ENCODE measurements at regions of chr11 and their contacts with region 1.

Region 1: DNA sequence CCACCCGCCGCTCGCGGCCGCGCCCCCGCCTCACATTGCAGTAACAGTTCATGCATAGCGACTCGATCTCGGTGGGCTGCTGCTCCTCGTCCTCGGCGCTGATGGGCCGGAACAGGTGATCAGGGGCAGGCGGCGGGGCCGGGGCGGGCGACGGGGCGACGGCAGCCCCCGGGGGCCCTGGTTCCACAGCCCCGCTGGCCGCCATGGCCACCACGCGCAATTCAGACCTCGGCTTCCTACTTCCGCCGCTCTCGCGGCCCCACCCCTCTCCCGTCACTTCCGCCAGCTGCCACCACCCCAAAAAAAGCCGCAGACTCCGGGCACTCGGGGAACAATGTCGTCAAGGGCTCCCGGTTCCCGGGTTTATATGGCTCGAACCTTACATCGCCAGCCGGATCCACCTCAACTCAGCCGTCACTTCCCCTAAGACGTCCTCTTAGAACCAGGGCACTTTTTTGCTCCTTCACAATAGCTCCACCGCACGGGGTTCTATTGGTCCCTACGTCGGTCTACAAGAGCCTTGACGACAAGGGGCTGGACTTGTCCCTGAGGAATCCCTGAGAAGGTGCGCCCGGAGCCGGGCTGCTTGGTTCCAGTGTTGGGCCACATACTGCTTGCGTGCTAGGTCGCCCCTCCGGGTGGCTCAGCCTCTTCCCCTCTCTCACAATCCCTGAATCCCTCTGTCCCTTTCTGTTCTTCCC is at the start of gene ZPR1:
- DNase-seq: peak; percentile 83
- H3K4me3 Mint-ChIP-seq: peak within 1 kb of the TSS; percentile 90
- H3K27ac Mint-ChIP-seq: peak within 1 kb of the TSS; percentile 81
- H3K4me1 Mint-ChIP-seq: peaks cover 44% of the 10 kb centered on the region
- H3K27me3 Mint-ChIP-seq: no peaks in the 10 kb centered on the region
- total RNA-seq, gene ZPR1: 84.1 and 84.7 TPM in 2 replicates

Region 2: DNA sequence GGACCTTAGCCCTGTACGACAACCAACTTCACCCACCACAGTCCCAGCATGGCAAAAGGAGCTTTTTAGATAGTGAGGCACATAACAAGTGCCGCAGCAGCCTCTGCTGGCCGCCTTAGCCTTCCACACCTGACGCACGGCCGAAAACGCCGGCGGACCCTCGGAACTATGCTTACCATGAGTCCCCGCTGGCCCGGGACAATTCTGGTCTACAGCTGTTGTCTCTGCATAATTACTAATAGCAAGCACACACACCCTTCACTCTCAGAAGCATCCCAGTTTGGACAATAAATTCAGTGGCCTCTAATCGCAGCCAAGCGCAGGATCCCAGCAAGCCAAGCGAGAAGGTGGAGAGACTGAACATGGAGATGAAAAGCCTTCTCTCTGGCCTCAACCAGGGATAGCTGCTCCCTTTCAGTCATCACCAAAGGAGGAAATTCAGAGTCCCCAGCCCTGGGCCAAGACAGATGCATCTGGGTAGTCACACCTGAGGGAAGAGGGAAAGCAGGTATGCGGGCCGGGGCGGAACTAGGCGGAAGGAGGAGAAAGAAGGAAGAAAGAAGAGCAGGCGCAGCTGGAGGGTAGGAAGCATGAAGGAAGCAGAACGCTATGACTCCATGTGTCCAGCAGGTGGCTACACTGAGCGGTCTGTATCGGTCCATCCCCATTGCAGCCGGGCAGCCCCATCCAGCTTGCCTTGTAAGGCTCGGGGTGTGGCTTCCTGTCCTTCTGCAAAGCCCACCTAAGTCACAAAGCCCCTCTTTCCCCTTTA is 55.5 kb before region 1 on chr11:
- intact Hi-C with region 1: no loop called
- DNase-seq: peak; percentile 24
- H3K4me3 Mint-ChIP-seq: no peak overlapping the region
- H3K27ac Mint-ChIP-seq: peak overlapping the region; percentile 2
- H3K4me1 Mint-ChIP-seq: peaks cover 11% of the 10 kb centered on the region
- H3K27me3 Mint-ChIP-seq: no peaks in the 10 kb centered on the region

Region 3: GRCh38 chr11:116772443-116773202 is 15.3 kb before region 1 on chr11 and contains the start of gene BUD13:
- intact Hi-C with region 1: loop called (anchors 1 kb)
- DNase-seq: peak; percentile 93
- H3K4me3 Mint-ChIP-seq: peak within 1 kb of the TSS; percentile 99
- H3K27ac Mint-ChIP-seq: peak within 1 kb of the TSS; percentile 97
- H3K4me1 Mint-ChIP-seq: peaks cover 39% of the 10 kb centered on the region
- H3K27me3 Mint-ChIP-seq: no peaks in the 10 kb centered on the region
- total RNA-seq, gene BUD13: 30.4 and 34.3 TPM in 2 replicates

Region 4: DNA sequence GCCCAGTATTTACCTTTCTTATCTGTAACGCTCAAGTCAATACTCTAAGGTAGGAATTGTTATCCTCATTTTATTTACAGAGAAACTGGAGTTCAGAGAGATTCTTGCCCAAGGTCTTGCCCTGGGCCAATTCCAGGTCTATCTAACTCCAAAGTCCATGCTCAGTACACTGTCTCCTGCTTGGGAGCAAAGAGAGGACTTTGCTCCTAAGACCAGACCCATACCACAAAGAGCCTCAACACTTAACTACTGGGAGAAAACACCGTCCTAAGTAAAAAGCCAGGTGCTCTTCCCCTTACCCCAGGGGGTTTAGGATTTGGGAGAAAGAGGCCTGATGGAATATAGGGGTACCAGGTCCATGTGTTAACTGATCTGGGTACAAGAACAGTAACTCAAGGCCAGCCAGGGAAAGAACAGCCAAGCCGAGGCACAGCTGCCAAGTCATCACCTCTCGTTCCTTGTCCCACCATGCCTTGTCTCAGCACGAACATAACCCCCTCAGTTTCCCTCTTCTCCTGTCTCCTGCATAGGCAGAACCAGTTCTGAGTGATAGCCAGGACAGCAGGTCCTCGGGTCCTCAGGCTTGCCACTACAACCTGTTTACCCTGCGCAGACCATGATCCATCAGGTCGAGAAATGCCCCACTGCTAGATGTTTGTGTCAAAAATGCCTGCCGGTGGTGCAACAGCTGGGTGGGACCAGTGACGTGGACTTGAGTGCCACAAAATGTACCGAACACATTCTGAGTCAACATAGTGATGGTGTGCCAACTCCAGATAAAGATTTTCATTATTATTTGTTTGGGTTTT is 20.7 kb after region 1 on chr11:
- intact Hi-C with region 1: no loop called
- DNase-seq: no peak
- H3K4me3 Mint-ChIP-seq: no peak overlapping the region
- H3K27ac Mint-ChIP-seq: no peak overlapping the region
- H3K4me1 Mint-ChIP-seq: peaks cover 2% of the 10 kb centered on the region
- H3K27me3 Mint-ChIP-seq: peaks cover 19% of the 10 kb centered on the region

Region 5: GRCh38 chr11:116835791-116836631 is 48.1 kb after region 1 on chr11:
- intact Hi-C with region 1: loop called (anchors 2 kb)
- DNase-seq: peak; percentile 76
- H3K4me3 Mint-ChIP-seq: peak overlapping the region; percentile 49
- H3K27ac Mint-ChIP-seq: no peak overlapping the region
- H3K4me1 Mint-ChIP-seq: peaks cover 6% of the 10 kb centered on the region
- H3K27me3 Mint-ChIP-seq: no peaks in the 10 kb centered on the region

Region 6: DNA sequence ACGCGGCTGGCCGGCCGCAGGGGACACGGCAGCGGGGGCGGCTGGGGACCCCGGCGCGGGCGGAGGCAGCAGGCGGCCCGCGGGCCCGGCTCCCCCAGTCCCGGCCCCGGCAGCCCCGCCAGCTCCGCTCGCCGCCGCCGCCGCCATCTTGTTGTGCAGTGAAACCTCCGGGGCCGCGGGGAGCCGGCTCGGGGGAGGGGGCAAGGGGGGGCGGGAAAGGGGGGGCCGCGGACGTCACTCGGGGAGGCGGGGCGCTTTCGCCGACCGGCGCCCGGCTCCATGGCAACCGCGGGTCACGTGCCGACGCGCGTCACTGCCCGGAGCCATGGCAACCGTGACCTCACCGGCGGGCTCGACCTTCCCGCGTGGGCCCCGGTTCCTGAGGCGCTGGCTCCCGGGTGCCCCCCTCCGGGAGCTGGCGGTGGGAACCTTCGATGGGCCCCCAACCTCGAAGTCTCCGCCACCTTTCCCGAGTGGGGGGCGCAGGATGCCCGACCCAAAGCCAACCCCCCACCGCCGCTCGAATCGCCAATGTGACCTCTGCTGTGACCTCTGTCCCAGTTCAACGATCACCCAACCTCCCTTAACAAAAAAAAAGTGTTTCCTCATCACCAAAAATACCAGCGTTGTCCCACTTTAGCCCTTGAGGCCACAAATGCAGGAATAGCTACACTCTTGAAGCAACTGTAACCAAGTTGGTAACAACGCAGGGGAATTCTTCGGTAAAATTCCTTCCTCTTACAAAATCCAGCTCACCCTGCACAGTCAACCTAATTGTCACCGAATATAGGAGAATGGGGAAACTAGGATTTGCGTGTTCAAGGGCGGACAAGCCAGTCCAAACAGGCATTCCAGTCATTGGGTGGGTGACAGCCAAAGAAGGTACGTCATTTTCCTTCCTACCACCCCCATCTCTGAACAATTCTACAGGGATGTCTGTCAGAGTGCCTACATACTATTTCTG is 310.6 kb after region 1 on chr11 and contains the start of gene SIK3:
- intact Hi-C with region 1: loop called (anchors 1 kb)
- DNase-seq: peak; percentile 87
- H3K4me3 Mint-ChIP-seq: peak within 1 kb of the TSS; percentile 98
- H3K27ac Mint-ChIP-seq: peak within 1 kb of the TSS; percentile 90
- H3K4me1 Mint-ChIP-seq: peaks cover 48% of the 10 kb centered on the region
- H3K27me3 Mint-ChIP-seq: peaks cover 6% of the 10 kb centered on the region
- total RNA-seq, gene SIK3: 25.3 and 25.6 TPM in 2 replicates

Region 7: DNA sequence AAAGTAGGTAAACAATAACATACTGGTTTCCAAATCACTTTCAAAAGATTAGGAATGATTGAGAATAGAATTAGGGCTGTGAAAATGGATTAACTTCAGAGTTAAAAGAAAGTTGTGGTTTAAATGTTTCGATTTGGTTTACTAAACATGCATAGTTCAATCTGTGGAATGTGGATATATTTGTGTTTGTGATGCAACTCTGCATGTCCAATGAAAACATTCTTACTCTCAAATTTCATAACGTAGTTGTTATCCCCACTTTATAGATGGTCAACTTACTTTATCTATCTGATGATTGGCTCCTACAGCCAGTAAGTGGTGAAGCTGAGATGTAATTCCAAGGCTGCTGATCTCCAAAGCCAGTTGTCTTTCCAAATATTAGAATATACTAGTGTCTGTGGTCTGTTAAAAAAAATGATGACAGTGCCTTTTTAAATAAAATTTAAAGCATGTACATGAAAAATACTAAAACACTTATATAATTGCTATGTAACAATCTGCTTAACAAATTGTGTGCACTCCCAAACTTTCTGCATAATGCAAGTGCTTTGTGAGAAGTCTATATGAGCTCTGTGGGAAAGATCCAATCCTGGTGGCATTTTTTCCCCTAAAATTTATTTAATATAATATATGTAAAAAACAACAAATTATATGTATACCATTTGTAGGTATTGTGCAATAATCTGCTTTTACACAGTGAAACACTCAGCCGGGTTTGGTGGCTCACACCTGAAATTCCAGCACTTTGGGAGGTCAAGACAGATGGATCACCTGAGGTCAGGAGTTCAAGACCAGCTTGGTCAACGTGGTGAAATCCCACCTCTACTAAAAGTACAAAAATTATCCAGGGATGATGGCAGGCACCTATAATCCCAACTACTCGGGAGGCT is 320.0 kb after region 1 on chr11:
- intact Hi-C with region 1: loop called (anchors 1 kb)
- DNase-seq: no peak
- H3K4me3 Mint-ChIP-seq: no peak overlapping the region
- H3K27ac Mint-ChIP-seq: no peak overlapping the region
- H3K4me1 Mint-ChIP-seq: no peaks in the 10 kb centered on the region
- H3K27me3 Mint-ChIP-seq: no peaks in the 10 kb centered on the region

Region 8: GRCh38 chr11:117232092-117232878 is 444.3 kb after region 1 on chr11 and contains the start of gene RNF214:
- intact Hi-C with region 1: loop called (anchors 5 kb)
- DNase-seq: peak; percentile 68
- H3K4me3 Mint-ChIP-seq: peak within 1 kb of the TSS; percentile 98
- H3K27ac Mint-ChIP-seq: peak within 1 kb of the TSS; percentile 100
- H3K4me1 Mint-ChIP-seq: peaks cover 31% of the 10 kb centered on the region
- H3K27me3 Mint-ChIP-seq: no peaks in the 10 kb centered on the region
- total RNA-seq, gene RNF214: 22.7 and 25.8 TPM in 2 replicates

Region 9: GRCh38 chr11:117290809-117291396 is 503.0 kb after region 1 on chr11 and contains the start of gene BACE1-AS:
- intact Hi-C with region 1: no loop called
- DNase-seq: no peak
- H3K4me3 Mint-ChIP-seq: no peak within 1 kb of the TSS
- H3K27ac Mint-ChIP-seq: no peak within 1 kb of the TSS
- H3K4me1 Mint-ChIP-seq: peaks cover 4% of the 10 kb centered on the region
- H3K27me3 Mint-ChIP-seq: no peaks in the 10 kb centered on the region
- total RNA-seq, gene BACE1-AS: 4.6 and 5.3 TPM in 2 replicates